B cell (primary cell): ENCODE measurements at regions of chr6 and their contacts with region 1.

Region 1: DNA sequence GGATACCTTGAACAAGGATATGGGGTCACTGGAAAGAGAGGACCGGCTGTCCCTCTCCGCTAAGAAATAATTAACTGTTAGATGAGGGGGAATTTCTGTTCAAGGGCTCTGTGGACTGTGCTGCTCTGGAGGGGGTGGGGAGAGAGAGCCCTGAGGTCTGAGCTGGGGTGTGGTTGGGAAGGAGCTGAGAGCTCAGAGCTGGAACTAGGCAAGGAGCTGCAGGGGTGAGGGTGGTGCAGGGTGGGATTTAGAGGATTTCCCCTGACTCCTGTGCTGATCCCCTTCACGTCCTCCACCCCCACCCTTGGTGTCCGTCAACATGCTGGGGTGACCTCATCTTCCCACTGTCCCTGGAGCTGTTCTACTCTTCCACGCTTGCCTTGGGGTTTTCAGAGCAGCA is 52.5 kb downstream of the HLA-A start:
- DNase-seq: no peak
- ATAC-seq: no peak
- H3K4me3 ChIP-seq: no peak overlapping the region
- H3K4me3 Mint-ChIP-seq: no peak overlapping the region
- H3K27ac ChIP-seq: no peak overlapping the region
- H3K27ac Mint-ChIP-seq: no peak overlapping the region
- H3K4me1 ChIP-seq: no peaks in the 10 kb centered on the region
- H3K4me1 Mint-ChIP-seq: no peaks in the 10 kb centered on the region
- H3K27me3 ChIP-seq: peaks cover 0 to 28% (median 0%) of the 10 kb centered on the region in 4 experiments
- H3K27me3 Mint-ChIP-seq: peaks cover 41% of the 10 kb centered on the region
- CTCF ChIP-seq: no peak

Region 2: GRCh38 chr6:30035784-30036183 is 41.0 kb after region 1 on chr6:
- CTCF ChIA-PET with region 1: no interaction called
- POLR2A ChIA-PET with region 1: no interaction called
- intact Hi-C with region 1: loop called (anchors 1 kb)
- DNase-seq: no peak
- ATAC-seq: no peak
- H3K4me3 ChIP-seq: no peak overlapping the region
- H3K4me3 Mint-ChIP-seq: no peak overlapping the region
- H3K27ac ChIP-seq: no peak overlapping the region
- H3K27ac Mint-ChIP-seq: no peak overlapping the region
- H3K4me1 ChIP-seq: no peaks in the 10 kb centered on the region
- H3K4me1 Mint-ChIP-seq: no peaks in the 10 kb centered on the region
- H3K27me3 ChIP-seq: no peaks in the 10 kb centered on the region
- H3K27me3 Mint-ChIP-seq: no peaks in the 10 kb centered on the region
- CTCF ChIP-seq: no peak

Region 3: GRCh38 chr6:30047220-30047619 is 52.4 kb after region 1 on chr6:
- CTCF ChIA-PET with region 1: no interaction called
- POLR2A ChIA-PET with region 1: no interaction called
- intact Hi-C with region 1: no loop called
- DNase-seq: no peak
- ATAC-seq: no peak
- H3K4me3 ChIP-seq: no peak overlapping the region
- H3K4me3 Mint-ChIP-seq: no peak overlapping the region
- H3K27ac ChIP-seq: no peak overlapping the region
- H3K27ac Mint-ChIP-seq: no peak overlapping the region
- H3K4me1 ChIP-seq: no peaks in the 10 kb centered on the region
- H3K4me1 Mint-ChIP-seq: peaks cover 4% of the 10 kb centered on the region
- H3K27me3 ChIP-seq: no peaks in the 10 kb centered on the region
- H3K27me3 Mint-ChIP-seq: no peaks in the 10 kb centered on the region
- CTCF ChIP-seq: no peak